GM12878 (cell line): ENCODE measurements at regions of chr1 and their contacts with region 1.

Region 1: GRCh38 chr1:29235955-29236684 is at the start of gene PTPRU:
- DNase-seq: no peak
- ATAC-seq: peak; percentile 93
- H3K4me3 ChIP-seq: peak within 1 kb of the TSS; percentile 27; the same call in 1 of the 2 replicates
- H3K27ac ChIP-seq: no peak within 1 kb of the TSS
- H3K4me1 ChIP-seq: peaks cover 8% of the 10 kb centered on the region
- H3K27me3 ChIP-seq: peaks cover 10 to 21% of the 10 kb centered on the region in 2 experiments
- CTCF ChIP-seq: peak; percentile 53 to 79 (median 58); a peak in 5 of 6 replicates
- EP300 ChIP-seq: no peak
- POLR2A ChIP-seq: no peak
- RAD21 ChIP-seq: peak; percentile 74
- polyA plus RNA-seq, gene PTPRU: 0.04 to 0.05 TPM

Region 2: DNA sequence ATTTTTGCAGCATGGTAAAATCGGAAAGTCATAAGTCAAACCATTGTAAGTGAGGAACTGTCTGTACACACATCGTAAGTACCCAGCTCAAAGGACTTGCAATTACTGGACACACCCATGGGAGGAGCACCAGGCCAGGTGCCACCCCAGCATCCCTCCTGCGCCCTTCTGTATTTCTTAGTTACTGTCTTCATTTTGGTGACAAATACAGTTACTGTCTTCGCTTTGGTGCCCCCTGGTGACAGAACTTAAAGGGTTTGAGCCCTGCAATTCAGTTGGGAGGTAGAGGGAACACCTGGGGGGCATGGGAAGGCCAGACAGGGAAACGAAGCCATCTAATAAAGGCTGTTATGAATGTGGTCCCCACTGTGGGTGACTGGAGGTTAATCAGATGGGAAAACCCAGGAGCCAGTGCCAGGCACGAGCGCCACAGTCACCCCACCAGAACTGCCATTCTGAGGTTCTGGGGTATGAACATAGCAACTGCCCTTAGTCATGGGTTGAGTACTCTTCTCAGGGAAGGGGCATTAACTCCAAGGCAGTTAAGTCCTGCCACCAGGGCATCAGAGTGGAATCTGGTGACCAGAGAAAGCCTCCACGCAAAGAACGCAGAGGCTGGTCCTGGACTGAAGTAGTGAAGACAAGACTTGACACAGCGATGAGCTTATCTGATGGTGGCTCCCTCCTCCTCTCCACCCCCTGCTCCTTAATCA is 613.1 kb after region 1 on chr1:
- CTCF ChIA-PET with region 1: no interaction called
- POLR2A ChIA-PET with region 1: no interaction called
- RAD21 ChIA-PET with region 1: no interaction called
- SMC1A ChIA-PET with region 1: interaction called, 3 read pairs
- in situ Hi-C with region 1: loop called (anchors 10 kb)
- intact Hi-C with region 1: loop called (anchors 2 kb)
- DNase-seq: peak; percentile 1
- ATAC-seq: peak; percentile 71
- H3K4me3 ChIP-seq: no peak overlapping the region
- H3K27ac ChIP-seq: no peak overlapping the region
- H3K4me1 ChIP-seq: no peaks in the 10 kb centered on the region
- H3K27me3 ChIP-seq: no peaks in the 10 kb centered on the region; a peak in 2 of 4 replicates
- CTCF ChIP-seq: peak; percentile 42 to 56 (median 53)
- EP300 ChIP-seq: no peak
- POLR2A ChIP-seq: no peak
- RAD21 ChIP-seq: peak; percentile 69

Region 3: GRCh38 chr1:30106125-30106524 is 870.0 kb after region 1 on chr1:
- CTCF ChIA-PET with region 1: no interaction called
- POLR2A ChIA-PET with region 1: no interaction called
- RAD21 ChIA-PET with region 1: no interaction called
- SMC1A ChIA-PET with region 1: no interaction called
- in situ Hi-C with region 1: no loop called
- intact Hi-C with region 1: loop called (anchors 5 kb)
- DNase-seq: no peak
- ATAC-seq: peak; percentile 78
- H3K4me3 ChIP-seq: no peak overlapping the region
- H3K27ac ChIP-seq: no peak overlapping the region
- H3K4me1 ChIP-seq: no peaks in the 10 kb centered on the region
- H3K27me3 ChIP-seq: peaks cover 2 to 11% of the 10 kb centered on the region in 2 experiments; a peak in 3 of 4 replicates
- CTCF ChIP-seq: peak; percentile 22 to 42 (median 41); a peak in 4 of 6 replicates
- EP300 ChIP-seq: no peak
- POLR2A ChIP-seq: no peak
- RAD21 ChIP-seq: peak; percentile 6; the same call in 1 of the 2 replicates

Region 4: DNA sequence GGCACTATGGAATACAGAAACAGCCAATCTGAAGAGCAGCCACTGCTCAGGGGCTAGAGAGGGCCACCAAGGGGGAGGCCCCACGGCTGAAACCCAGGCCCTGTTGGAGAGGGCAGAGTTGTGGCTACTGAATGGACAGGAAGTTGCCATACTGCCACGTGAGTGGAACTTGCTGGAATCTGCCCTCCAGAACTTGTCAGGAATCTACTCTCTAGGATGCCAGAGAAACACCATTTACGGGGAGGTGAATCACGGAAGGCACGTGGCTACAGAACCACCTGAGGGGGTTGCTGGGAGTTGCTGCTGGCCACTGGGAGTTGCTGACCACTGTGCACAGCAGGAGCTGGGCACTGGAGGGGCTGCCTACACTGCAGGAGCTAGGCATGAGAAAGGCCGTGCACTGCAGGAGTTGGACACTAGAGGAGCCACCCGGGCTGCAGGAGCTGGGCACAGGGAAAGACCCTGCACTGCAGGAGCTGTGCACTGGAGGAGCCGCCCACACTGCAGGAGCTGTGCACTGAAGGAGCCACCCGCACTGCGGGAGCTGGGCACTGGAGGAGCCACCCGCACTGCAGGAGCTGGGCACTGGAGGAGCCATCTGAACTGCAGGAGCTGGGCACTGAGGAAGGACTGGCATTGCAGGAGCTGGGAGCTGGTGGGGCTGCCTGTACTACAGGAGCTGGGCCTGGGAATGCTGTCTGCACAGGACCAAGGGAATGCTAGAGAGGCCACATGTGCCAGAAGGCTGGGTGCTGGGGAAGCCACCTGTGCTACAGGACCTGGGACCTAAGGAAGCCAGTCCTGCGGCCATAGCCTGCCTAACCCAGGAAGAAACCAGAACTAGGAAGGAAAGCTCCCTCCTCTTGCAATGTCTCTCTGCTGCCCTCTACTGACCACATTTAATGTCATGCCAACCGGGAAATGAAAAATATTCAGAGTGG is 1143.8 kb after region 1 on chr1:
- CTCF ChIA-PET with region 1: no interaction called
- POLR2A ChIA-PET with region 1: no interaction called
- RAD21 ChIA-PET with region 1: no interaction called
- SMC1A ChIA-PET with region 1: no interaction called
- in situ Hi-C with region 1: no loop called
- intact Hi-C with region 1: loop called (anchors 2 kb)
- DNase-seq: peak; percentile 19
- ATAC-seq: peak; percentile 79
- H3K4me3 ChIP-seq: no peak overlapping the region
- H3K27ac ChIP-seq: no peak overlapping the region
- H3K4me1 ChIP-seq: no peaks in the 10 kb centered on the region
- H3K27me3 ChIP-seq: peaks cover 0 to 2% of the 10 kb centered on the region in 2 experiments; a peak in 1 of 4 replicates
- CTCF ChIP-seq: peak; percentile 72 to 90 (median 90)
- EP300 ChIP-seq: no peak
- POLR2A ChIP-seq: no peak
- RAD21 ChIP-seq: peak; percentile 76